ENCODE measurements at regions of chr15 and their contacts with region 1.

Region 1: GRCh38 chr15:25426896-25427610 is 11.8 kb downstream of the UBE3A start:
- DNase-seq: no peak
- ATAC-seq: no peak
- H3K4me3 ChIP-seq: no peak overlapping the region
- H3K4me3 Mint-ChIP-seq: no peak overlapping the region
- H3K27ac ChIP-seq: no peak overlapping the region
- H3K27ac Mint-ChIP-seq: no peak overlapping the region
- H3K4me1 ChIP-seq: peaks cover 15% of the 10 kb centered on the region
- H3K4me1 Mint-ChIP-seq: peaks cover 74% of the 10 kb centered on the region
- H3K27me3 ChIP-seq: no peaks in the 10 kb centered on the region
- H3K27me3 Mint-ChIP-seq: no peaks in the 10 kb centered on the region
- CTCF ChIP-seq: no peak

Region 2: DNA sequence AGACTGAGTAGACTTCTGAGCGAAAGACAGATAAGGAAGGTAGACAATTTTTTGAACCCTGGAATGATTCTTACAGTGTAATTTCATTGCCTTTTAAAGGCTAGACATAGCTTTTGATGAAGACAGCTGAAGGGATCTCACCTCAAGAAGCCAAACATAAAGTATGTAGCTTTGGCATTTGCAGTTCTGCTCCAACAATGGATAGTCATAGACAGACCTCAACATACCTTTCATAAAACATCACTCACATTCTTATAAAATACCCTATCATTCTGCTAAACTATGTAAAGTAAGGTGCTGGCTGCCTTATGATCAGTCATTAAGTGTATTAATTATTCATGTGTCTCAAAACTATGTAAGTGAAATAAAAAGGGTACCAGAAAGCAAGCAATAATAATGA is 58.2 kb before region 1 on chr15:
- CTCF ChIA-PET with region 1: no interaction called
- POLR2A ChIA-PET with region 1: no interaction called
- intact Hi-C with region 1: no loop called
- DNase-seq: no peak
- ATAC-seq: no peak
- H3K4me3 ChIP-seq: no peak overlapping the region
- H3K4me3 Mint-ChIP-seq: no peak overlapping the region
- H3K27ac ChIP-seq: no peak overlapping the region
- H3K27ac Mint-ChIP-seq: no peak overlapping the region
- H3K4me1 ChIP-seq: no peaks in the 10 kb centered on the region
- H3K4me1 Mint-ChIP-seq: peaks cover 33% of the 10 kb centered on the region
- H3K27me3 ChIP-seq: no peaks in the 10 kb centered on the region
- H3K27me3 Mint-ChIP-seq: no peaks in the 10 kb centered on the region
- CTCF ChIP-seq: no peak

Region 3: GRCh38 chr15:25416693-25417092 is 10.4 kb before region 1 on chr15:
- CTCF ChIA-PET with region 1: no interaction called
- POLR2A ChIA-PET with region 1: interaction called, 11 read pairs
- intact Hi-C with region 1: no loop called
- DNase-seq: peak in 2 of 9 experiments; percentile 21 to 47
- ATAC-seq: no peak
- H3K4me3 ChIP-seq: no peak overlapping the region
- H3K4me3 Mint-ChIP-seq: peak overlapping the region; percentile 16
- H3K27ac ChIP-seq: no peak overlapping the region
- H3K27ac Mint-ChIP-seq: no peak overlapping the region
- H3K4me1 ChIP-seq: peaks cover 7% of the 10 kb centered on the region
- H3K4me1 Mint-ChIP-seq: peaks cover 76% of the 10 kb centered on the region
- H3K27me3 ChIP-seq: no peaks in the 10 kb centered on the region
- H3K27me3 Mint-ChIP-seq: no peaks in the 10 kb centered on the region
- CTCF ChIP-seq: no peak

Region 4: GRCh38 chr15:25450163-25450562 is 23.1 kb after region 1 on chr15:
- CTCF ChIA-PET with region 1: no interaction called
- POLR2A ChIA-PET with region 1: no interaction called
- intact Hi-C with region 1: no loop called
- DNase-seq: no peak
- ATAC-seq: no peak
- H3K4me3 ChIP-seq: no peak overlapping the region
- H3K4me3 Mint-ChIP-seq: no peak overlapping the region
- H3K27ac ChIP-seq: no peak overlapping the region
- H3K27ac Mint-ChIP-seq: no peak overlapping the region
- H3K4me1 ChIP-seq: no peaks in the 10 kb centered on the region
- H3K4me1 Mint-ChIP-seq: no peaks in the 10 kb centered on the region
- H3K27me3 ChIP-seq: no peaks in the 10 kb centered on the region
- H3K27me3 Mint-ChIP-seq: peaks cover 11% of the 10 kb centered on the region
- CTCF ChIP-seq: no peak

Measured in CD8-positive, alpha-beta T cell (primary cell).